Caco-2 (cell line): ENCODE measurements at regions of chr14 and their contacts with region 1.

Region 1: DNA sequence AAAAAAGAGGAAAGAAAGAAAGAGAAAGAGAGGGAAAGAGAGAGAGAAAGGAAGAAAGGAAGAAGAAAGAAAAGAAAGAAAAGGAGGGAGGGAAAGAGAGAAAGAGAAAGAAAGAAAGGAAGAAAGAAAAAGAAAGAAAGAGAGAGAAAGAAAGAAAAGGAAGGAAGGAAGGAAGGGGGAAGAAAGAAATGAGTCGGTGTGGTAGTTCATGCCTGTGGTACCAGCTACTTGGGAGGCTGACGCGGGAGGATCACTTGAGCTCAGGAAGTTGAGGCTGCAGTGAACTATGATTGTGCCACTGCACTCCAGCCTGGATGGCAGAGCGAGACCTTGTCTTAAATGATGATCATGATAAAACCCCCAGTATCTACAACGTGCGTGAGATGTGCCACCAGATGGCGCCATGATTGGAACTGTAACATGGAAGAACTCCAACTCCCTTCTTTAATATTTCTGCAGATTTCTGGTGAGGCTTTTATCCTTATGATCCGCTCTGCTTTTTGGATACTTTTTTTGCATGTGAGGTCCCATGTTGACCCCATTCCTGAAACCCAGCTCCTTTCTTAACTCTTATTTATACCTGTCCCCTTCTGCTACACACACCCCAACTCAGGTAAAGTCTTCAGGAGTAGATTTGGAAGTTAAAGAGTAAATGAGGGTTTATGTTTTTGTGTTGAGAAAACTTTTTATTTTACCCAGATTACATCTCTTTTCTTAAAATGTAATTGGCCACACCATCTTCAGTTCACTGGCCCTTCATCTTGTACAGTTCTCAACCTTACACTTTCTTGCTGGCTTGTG is 25.6 kb downstream of the RNASE10 start:
- DNase-seq: peak; percentile 77 to 78
- H3K4me3 ChIP-seq: no peak overlapping the region
- H3K4me3 Mint-ChIP-seq: peak overlapping the region; percentile 18
- H3K27ac Mint-ChIP-seq: no peak overlapping the region
- H3K4me1 ChIP-seq: no peaks in the 10 kb centered on the region
- H3K4me1 Mint-ChIP-seq: peaks cover 13% of the 10 kb centered on the region
- H3K27me3 ChIP-seq: no peaks in the 10 kb centered on the region
- H3K27me3 Mint-ChIP-seq: peaks cover 26% of the 10 kb centered on the region
- CTCF ChIP-seq: peak; percentile 65 to 83

Region 2: DNA sequence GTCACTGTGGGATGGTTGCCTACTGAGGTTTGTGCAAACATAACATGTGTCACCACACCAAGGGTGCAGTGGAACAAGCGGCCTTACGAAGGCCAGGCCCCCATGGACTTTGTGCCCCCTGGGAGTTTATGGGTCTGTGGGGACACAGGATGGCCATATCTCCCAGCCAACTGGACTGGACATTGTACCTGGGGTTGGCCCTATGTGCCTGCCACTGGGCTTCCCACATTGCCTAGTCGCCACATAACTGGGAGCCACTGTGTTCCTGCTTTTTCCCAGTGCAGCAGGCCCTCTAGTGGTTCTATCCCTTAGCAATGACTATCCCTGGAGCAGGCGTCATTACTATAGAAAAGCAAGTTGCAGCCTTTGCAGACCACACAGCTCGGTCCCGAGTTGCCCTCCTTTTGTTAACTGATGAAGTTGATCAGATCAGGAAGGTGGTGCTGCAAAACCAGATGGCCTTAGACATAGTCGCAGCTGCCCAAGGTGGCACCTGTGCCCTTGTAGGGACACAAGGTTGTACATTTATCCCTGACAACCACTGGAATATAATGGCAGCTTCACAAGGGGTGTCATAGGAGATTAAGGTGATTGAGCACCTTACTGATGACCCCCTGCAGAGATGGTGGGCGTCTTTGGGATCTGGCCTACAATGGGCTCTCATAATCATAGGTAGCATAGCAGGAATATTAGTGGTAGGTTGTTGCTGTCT is 75.4 kb after region 1 on chr14:
- CTCF ChIA-PET with region 1: no interaction called
- POLR2A ChIA-PET with region 1: no interaction called
- intact Hi-C with region 1: loop called (anchors 1 kb)
- DNase-seq: peak; percentile 68 to 73
- H3K4me3 ChIP-seq: no peak overlapping the region
- H3K4me3 Mint-ChIP-seq: no peak overlapping the region
- H3K27ac Mint-ChIP-seq: no peak overlapping the region
- H3K4me1 ChIP-seq: no peaks in the 10 kb centered on the region
- H3K4me1 Mint-ChIP-seq: peaks cover 6% of the 10 kb centered on the region
- H3K27me3 ChIP-seq: no peaks in the 10 kb centered on the region
- H3K27me3 Mint-ChIP-seq: no peaks in the 10 kb centered on the region
- CTCF ChIP-seq: peak; percentile 52 to 79